Gastrocnemius medialis (tissue), 4 donors: ENCODE measurements at regions of chr5 and their contacts with region 1.

Region 1: GRCh38 chr5:1140171-1140817 is 28.4 kb upstream of the SLC12A7 start:
- DNase-seq: peak; percentile 54 to 62
- ATAC-seq: peak; percentile 52 to 75
- H3K4me3 ChIP-seq: no peak overlapping the region
- H3K27ac ChIP-seq: no peak overlapping the region
- H3K4me1 ChIP-seq: peaks cover 0 to 3% of the 10 kb centered on the region in 2 donors
- H3K27me3 ChIP-seq: peaks cover 0 to 8% (median 0%) of the 10 kb centered on the region in 3 donors
- CTCF ChIP-seq: peak; percentile 48 to 85 (median 80)
- POLR2A ChIP-seq: no peak

Region 2: GRCh38 chr5:528625-529511 is 611.4 kb before region 1 on chr5:
- in situ Hi-C with region 1: no loop called
- intact Hi-C with region 1: no loop called
- DNase-seq: no peak
- ATAC-seq: no peak
- H3K4me3 ChIP-seq: no peak overlapping the region
- H3K27ac ChIP-seq: no peak overlapping the region
- H3K4me1 ChIP-seq: no peaks in the 10 kb centered on the region
- H3K27me3 ChIP-seq: peaks cover 70 to 81% (median 77%) of the 10 kb centered on the region in 3 donors
- CTCF ChIP-seq: no peak
- POLR2A ChIP-seq: no peak

Region 3: GRCh38 chr5:923281-923873 is 216.9 kb before region 1 on chr5:
- in situ Hi-C with region 1: no loop called
- intact Hi-C with region 1: loop called (anchors 1 kb)
- DNase-seq: peak; percentile 35 to 54
- ATAC-seq: peak; percentile 46 to 68
- H3K4me3 ChIP-seq: no peak overlapping the region
- H3K27ac ChIP-seq: no peak overlapping the region
- H3K4me1 ChIP-seq: peaks cover 0 to 11% of the 10 kb centered on the region in 2 donors
- H3K27me3 ChIP-seq: peaks cover 28 to 35% (median 28%) of the 10 kb centered on the region in 3 donors
- CTCF ChIP-seq: peak; percentile 38 to 74 (median 64)
- POLR2A ChIP-seq: no peak

Region 4: DNA sequence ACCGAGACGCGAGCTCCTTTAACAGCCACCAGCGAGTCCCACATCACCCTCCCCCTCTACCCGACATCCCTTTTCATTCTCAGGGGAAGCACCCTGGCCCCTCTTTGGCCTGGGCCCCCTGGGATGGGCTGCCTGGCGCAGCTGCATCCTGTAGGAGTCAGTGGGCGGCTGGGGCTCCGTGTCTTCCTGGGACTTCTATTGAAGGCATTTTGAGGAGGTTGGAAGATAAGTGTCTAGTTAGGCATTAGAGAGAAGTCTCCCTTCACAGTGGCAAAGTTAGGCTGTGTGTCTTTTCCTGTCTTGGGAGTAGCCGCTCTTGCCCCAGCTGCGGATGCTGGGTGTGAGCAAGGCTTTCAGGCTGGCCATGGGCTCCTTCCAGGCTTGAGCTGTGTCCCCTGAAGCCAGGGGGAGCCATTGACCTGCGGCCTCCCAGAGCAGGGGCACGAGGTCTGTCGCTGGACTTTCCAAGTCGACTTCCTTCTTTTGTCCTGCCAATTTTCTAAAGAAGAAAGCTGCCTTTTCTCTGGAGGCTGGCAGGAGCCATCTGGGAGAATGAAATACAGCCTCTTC is 150.2 kb before region 1 on chr5:
- in situ Hi-C with region 1: loop called in 2 of 4 experiments (anchors 10 to 25 kb)
- intact Hi-C with region 1: no loop called
- DNase-seq: peak; percentile 59 to 63
- ATAC-seq: peak; percentile 63 to 70
- H3K4me3 ChIP-seq: no peak overlapping the region
- H3K27ac ChIP-seq: peak overlapping the region in 1 of 4 donors; percentile 7
- H3K4me1 ChIP-seq: peaks cover 4 to 7% of the 10 kb centered on the region in 2 donors
- H3K27me3 ChIP-seq: peaks cover 0 to 10% (median 4%) of the 10 kb centered on the region in 3 donors
- CTCF ChIP-seq: peak; percentile 23 to 53 (median 44)
- POLR2A ChIP-seq: no peak

Region 5: DNA sequence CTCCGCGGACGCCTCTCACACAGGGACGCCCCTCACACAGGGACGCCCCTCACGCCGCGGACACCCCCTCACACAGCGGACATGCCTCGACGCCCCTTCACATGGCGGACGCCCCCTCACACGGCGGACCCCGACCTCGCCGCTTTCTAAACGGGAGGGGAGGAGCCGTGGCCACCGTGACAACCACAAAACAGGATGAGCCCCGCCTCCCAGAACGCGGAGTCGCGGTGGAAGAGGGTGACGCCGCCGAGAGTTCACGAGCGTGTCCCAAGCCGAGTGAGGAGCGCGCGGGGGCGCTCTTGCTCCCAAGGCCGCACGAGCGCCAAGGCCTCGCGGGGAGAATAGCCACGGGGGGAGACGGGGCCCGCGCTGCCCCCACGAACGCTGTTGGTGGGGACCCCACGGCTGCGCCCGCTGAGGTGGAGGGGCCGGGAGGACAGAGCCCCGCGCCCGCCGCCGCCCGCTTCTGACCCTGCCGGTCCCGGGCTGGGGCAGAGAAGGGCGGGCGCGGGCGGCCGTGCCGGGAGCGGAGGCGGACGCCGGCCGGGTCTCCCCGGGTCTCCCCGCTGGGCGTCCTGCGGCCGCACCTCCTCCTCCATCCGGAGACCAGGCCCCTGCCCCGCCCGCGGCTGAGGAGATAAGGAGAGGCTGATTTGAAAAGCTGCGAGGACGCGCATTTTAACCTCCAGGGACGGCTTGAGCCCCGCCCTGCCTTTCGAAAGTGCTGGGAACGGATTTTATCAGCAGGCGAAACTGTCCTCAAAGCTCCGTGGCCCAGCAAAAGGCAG is 135.6 kb before region 1 on chr5:
- in situ Hi-C with region 1: loop called in 3 of 4 experiments (anchors 10 to 25 kb)
- intact Hi-C with region 1: loop called (anchors 2 kb)
- DNase-seq: peak; percentile 26 to 45
- ATAC-seq: peak; percentile 48 to 67
- H3K4me3 ChIP-seq: peak overlapping the region; percentile 39 to 67 (median 54)
- H3K27ac ChIP-seq: peak overlapping the region; percentile 52 to 64 (median 58)
- H3K4me1 ChIP-seq: peaks cover 0 to 3% of the 10 kb centered on the region in 2 donors
- H3K27me3 ChIP-seq: peaks cover 16 to 36% (median 33%) of the 10 kb centered on the region in 3 donors
- CTCF ChIP-seq: peak in 3 of 5 experiments; percentile 15 to 36 (median 20)
- POLR2A ChIP-seq: no peak

Region 6: GRCh38 chr5:1052641-1053390 is 87.5 kb before region 1 on chr5:
- in situ Hi-C with region 1: no loop called
- intact Hi-C with region 1: loop called (anchors 1 kb)
- DNase-seq: no peak
- ATAC-seq: no peak
- H3K4me3 ChIP-seq: no peak overlapping the region
- H3K27ac ChIP-seq: no peak overlapping the region
- H3K4me1 ChIP-seq: no peaks in the 10 kb centered on the region
- H3K27me3 ChIP-seq: peaks cover 0 to 2% (median 0%) of the 10 kb centered on the region in 3 donors
- CTCF ChIP-seq: peak in 2 of 5 experiments; percentile 12 to 19
- POLR2A ChIP-seq: no peak

Region 7: DNA sequence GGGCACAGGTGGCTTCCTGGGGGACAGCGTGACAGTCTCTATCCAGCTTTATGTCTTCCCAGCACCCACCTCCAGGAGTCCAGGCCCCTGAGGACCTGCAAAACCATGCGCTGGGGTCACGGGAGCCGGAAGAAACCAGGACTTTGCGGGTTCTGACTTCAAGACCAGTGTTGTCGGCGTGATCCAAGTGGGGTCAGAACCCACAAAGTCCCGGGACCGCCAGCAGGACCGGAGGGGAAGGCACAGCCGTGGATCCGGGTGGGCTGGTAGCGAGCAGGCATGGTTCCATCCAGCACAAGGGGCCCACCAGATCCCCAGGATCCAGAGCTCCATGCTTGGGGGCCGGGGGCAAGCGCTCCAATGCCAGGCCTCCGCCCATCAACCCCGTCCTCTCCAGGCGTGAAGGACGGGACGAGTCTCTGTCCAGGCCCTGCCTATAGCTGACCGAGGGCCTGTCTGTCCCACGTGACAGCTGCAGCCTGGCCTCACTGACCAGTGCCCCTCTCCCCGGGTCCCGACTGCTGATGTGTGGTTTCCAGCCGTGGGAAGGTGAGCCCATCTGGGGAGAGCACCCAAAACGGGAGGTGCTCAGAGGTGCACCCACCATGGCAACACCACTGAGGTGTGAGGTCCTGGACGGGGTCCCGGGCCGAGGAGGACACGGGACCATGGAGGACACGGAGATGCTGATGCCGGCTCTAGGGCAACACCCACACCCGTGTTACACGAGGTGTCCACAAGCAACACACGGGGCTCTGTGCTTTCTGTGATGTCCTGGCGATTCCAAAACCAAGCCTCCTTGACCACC is 77.3 kb before region 1 on chr5:
- in situ Hi-C with region 1: no loop called
- intact Hi-C with region 1: no loop called
- DNase-seq: no peak
- ATAC-seq: no peak
- H3K4me3 ChIP-seq: no peak overlapping the region
- H3K27ac ChIP-seq: no peak overlapping the region
- H3K4me1 ChIP-seq: no peaks in the 10 kb centered on the region
- H3K27me3 ChIP-seq: no peaks in the 10 kb centered on the region
- CTCF ChIP-seq: no peak
- POLR2A ChIP-seq: no peak

Region 8: GRCh38 chr5:1103505-1104326 is 36.6 kb before region 1 on chr5:
- in situ Hi-C with region 1: no loop called
- intact Hi-C with region 1: loop called (anchors 5 kb)
- DNase-seq: peak; percentile 47 to 60
- ATAC-seq: peak; percentile 55 to 69
- H3K4me3 ChIP-seq: peak overlapping the region; percentile 11 to 41 (median 27)
- H3K27ac ChIP-seq: peak overlapping the region; percentile 45 to 74 (median 70)
- H3K4me1 ChIP-seq: peaks cover 27 to 36% of the 10 kb centered on the region in 2 donors
- H3K27me3 ChIP-seq: no peaks in the 10 kb centered on the region
- CTCF ChIP-seq: no peak
- POLR2A ChIP-seq: no peak

Region 9: DNA sequence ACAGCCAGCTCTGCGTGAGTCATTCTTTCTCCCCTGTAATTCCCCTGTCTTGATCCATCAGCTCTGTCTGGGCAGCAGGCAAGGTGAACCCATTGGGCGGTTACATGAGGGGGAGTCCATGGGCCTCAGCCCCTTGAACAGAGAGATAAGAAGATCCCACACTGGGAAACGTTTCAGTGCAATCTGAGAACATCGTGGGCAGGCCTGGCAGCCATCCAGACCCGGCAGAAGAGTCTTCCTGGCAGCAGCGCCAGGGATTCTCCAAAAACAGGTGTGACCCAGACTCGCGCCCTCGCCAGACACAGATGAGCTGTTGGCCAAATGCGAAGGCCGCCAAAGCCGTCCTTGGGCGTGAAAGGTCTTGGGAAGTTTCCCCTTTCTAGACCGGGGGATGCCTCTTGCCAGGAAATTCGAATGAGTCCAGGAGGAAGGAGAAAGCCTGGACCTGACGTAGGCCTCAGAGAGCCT is 22.0 kb before region 1 on chr5:
- in situ Hi-C with region 1: no loop called
- intact Hi-C with region 1: no loop called
- DNase-seq: peak in 1 of 2 donors; percentile 71
- ATAC-seq: peak; percentile 79 to 86
- H3K4me3 ChIP-seq: peak overlapping the region in 2 of 4 donors; percentile 0 to 2
- H3K27ac ChIP-seq: peak overlapping the region in 2 of 4 donors; percentile 3 to 36
- H3K4me1 ChIP-seq: peaks cover 23 to 27% of the 10 kb centered on the region in 2 donors
- H3K27me3 ChIP-seq: peaks cover 17 to 28% (median 23%) of the 10 kb centered on the region in 3 donors
- CTCF ChIP-seq: no peak
- POLR2A ChIP-seq: no peak

Region 10: DNA sequence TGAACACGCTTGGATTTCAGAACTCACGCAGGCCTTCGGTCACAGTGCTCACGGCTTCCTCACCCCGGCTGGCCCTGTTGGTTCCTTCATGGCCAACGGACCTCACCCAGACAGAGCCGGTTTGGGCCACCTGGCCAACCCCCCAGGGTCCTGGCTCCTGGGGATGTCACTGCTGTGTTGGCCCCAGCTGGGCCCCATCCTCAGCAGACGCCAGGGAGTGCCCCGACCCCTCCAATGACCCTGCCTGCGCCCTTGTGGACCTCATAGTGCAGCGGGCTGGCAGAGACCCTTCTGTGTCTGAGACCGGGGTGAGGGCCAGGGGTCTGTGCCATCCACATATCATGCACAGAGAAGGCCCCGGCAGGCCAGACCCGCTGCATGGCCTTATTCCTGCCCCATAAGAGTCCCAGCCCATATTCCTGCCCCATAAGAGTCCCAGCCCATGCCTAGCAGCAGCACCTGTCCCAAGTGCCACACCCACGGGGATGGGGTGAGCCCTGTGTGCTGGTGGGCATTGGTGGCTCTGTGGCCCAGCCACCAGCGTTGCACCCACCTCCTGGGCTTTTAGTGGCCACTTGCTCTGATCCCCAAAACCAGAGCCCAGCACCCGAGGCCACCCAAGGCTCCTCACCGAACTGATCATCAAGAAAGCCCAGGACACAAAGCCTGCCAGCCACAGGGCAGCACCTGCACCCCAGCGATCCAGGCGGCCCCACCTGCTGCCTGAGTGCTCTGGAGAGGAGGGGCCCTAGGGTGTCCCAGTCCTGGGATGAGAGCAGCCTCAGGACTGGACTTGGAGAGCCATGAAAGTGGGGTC is 384.7 kb after region 1 on chr5:
- in situ Hi-C with region 1: no loop called
- intact Hi-C with region 1: no loop called
- DNase-seq: peak in 1 of 2 donors; percentile 11
- ATAC-seq: no peak
- H3K4me3 ChIP-seq: no peak overlapping the region
- H3K27ac ChIP-seq: no peak overlapping the region
- H3K4me1 ChIP-seq: peaks cover 0 to 10% of the 10 kb centered on the region in 2 donors
- H3K27me3 ChIP-seq: peaks cover 0 to 6% (median 5%) of the 10 kb centered on the region in 3 donors
- CTCF ChIP-seq: no peak
- POLR2A ChIP-seq: no peak